Endothelial cell of umbilical vein (primary cell): ENCODE measurements at regions of chr1 and their contacts with region 1.

Region 1: GRCh38 chr1:9317591-9318417 is 25.1 kb downstream of the SPSB1 start:
- DNase-seq: peak; percentile 83
- H3K4me3 ChIP-seq: no peak overlapping the region
- H3K27ac ChIP-seq: peak overlapping the region; percentile 79
- H3K4me1 ChIP-seq: peaks cover 18% of the 10 kb centered on the region
- H3K27me3 ChIP-seq: no peaks in the 10 kb centered on the region
- CTCF ChIP-seq: no peak
- POLR2A ChIP-seq: no peak

Region 2: DNA sequence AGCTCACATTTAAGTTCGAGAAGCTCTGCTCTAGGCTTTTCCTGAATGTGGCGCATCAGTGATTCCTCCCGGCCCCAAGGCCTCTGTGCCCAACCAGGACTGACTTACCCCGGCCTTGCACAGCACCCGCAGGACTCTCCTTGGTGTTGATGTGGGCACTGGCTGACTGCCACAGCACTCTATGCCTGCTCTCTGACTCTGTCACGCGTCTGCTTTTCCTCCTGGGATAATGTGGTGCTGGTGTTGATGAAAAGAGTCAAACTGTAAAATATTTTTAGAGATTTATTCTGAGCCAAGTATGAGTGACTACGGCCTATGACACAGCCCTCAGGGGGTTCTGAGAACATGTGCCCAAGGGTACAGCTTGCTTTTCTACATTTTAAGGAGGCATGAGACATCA is 232.9 kb before region 1 on chr1:
- CTCF ChIA-PET with region 1: no interaction called
- POLR2A ChIA-PET with region 1: no interaction called
- dilution Hi-C with region 1: no loop called
- intact Hi-C with region 1: no loop called
- DNase-seq: no peak
- H3K4me3 ChIP-seq: no peak overlapping the region
- H3K27ac ChIP-seq: no peak overlapping the region
- H3K4me1 ChIP-seq: no peaks in the 10 kb centered on the region
- H3K27me3 ChIP-seq: peaks cover 0 to 8% of the 10 kb centered on the region in 2 experiments
- CTCF ChIP-seq: no peak
- POLR2A ChIP-seq: no peak

Region 3: DNA sequence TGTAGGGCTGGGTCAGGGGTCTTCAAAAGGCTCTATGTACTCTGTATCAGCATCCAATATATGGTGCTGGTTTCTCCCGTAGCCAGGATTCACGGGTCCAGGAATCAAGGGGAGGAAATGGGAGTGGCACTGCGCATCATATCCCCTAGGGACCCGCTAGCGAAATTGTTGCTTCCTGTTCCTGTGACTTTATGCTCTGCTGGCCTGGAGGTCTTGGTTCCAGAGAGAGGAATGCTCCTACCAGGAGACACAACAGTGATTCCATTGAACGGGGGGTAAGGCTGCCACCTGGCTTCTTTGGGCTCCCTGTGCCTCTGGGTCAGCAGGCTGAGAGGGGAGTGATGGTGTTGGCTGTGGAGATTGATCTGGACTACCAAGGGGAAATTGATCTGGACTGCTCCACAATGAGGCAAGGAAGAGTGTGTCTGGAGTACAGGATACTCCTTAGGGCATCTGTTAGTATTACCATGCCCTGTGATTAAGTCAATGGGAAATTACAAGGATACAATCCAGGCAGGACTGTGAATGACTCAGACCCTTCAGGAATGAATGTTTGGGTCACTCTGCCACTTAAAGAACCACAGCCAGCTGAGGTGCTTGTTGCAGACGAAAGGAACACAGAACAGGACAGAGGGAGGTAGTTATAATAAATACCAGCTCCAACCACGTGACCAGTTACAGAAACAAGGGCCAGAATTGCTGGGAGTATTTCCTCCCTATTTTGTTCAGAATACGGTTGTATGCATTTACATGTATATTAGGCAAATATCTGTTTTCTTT is 14.9 kb before region 1 on chr1:
- CTCF ChIA-PET with region 1: interaction called, 7 read pairs
- POLR2A ChIA-PET with region 1: no interaction called
- dilution Hi-C with region 1: no loop called
- intact Hi-C with region 1: loop called (anchors 1 kb)
- DNase-seq: peak; percentile 83
- H3K4me3 ChIP-seq: peak overlapping the region in 1 of 3 experiments; percentile 37
- H3K27ac ChIP-seq: peak overlapping the region; percentile 93
- H3K4me1 ChIP-seq: peaks cover 27% of the 10 kb centered on the region
- H3K27me3 ChIP-seq: no peaks in the 10 kb centered on the region
- CTCF ChIP-seq: no peak
- POLR2A ChIP-seq: peak; percentile 45

Region 4: GRCh38 chr1:9331558-9332346 is 13.9 kb after region 1 on chr1:
- CTCF ChIA-PET with region 1: no interaction called
- POLR2A ChIA-PET with region 1: no interaction called
- dilution Hi-C with region 1: no loop called
- intact Hi-C with region 1: loop called (anchors 2 kb)
- DNase-seq: no peak
- H3K4me3 ChIP-seq: no peak overlapping the region
- H3K27ac ChIP-seq: no peak overlapping the region
- H3K4me1 ChIP-seq: no peaks in the 10 kb centered on the region
- H3K27me3 ChIP-seq: no peaks in the 10 kb centered on the region
- CTCF ChIP-seq: no peak
- POLR2A ChIP-seq: no peak

Region 5: GRCh38 chr1:9376886-9377333 is 59.1 kb after region 1 on chr1:
- CTCF ChIA-PET with region 1: no interaction called
- POLR2A ChIA-PET with region 1: no interaction called
- dilution Hi-C with region 1: no loop called
- intact Hi-C with region 1: no loop called
- DNase-seq: peak; percentile 68
- H3K4me3 ChIP-seq: no peak overlapping the region
- H3K27ac ChIP-seq: peak overlapping the region; percentile 59
- H3K4me1 ChIP-seq: peaks cover 30% of the 10 kb centered on the region
- H3K27me3 ChIP-seq: no peaks in the 10 kb centered on the region
- CTCF ChIP-seq: no peak
- POLR2A ChIP-seq: no peak

Region 6: GRCh38 chr1:9473032-9473792 is 155.4 kb after region 1 on chr1:
- CTCF ChIA-PET with region 1: no interaction called
- POLR2A ChIA-PET with region 1: no interaction called
- dilution Hi-C with region 1: no loop called
- intact Hi-C with region 1: no loop called
- DNase-seq: peak; percentile 24
- H3K4me3 ChIP-seq: no peak overlapping the region
- H3K27ac ChIP-seq: no peak overlapping the region
- H3K4me1 ChIP-seq: no peaks in the 10 kb centered on the region
- H3K27me3 ChIP-seq: no peaks in the 10 kb centered on the region
- CTCF ChIP-seq: no peak
- POLR2A ChIP-seq: no peak